Transverse colon (tissue), 4 donors: ENCODE measurements at regions of chr12 and their contacts with region 1.

Region 1: GRCh38 chr12:71627438-71628002 is 36.1 kb downstream of the ZFC3H1 start:
- DNase-seq: no peak
- H3K4me3 ChIP-seq: no peak overlapping the region
- H3K27ac ChIP-seq: no peak overlapping the region
- H3K4me1 ChIP-seq: peaks cover 0 to 7% (median 0%) of the 10 kb centered on the region in 4 donors
- H3K27me3 ChIP-seq: no peaks in the 10 kb centered on the region
- CTCF ChIP-seq: no peak
- EP300 ChIP-seq: no peak
- POLR2A ChIP-seq: no peak

Region 2: GRCh38 chr12:71694099-71694820 is 66.7 kb after region 1 on chr12:
- in situ Hi-C with region 1: no loop called
- intact Hi-C with region 1: loop called (anchors 2 kb)
- DNase-seq: peak; percentile 28
- H3K4me3 ChIP-seq: no peak overlapping the region
- H3K27ac ChIP-seq: peak overlapping the region; percentile 73 to 98 (median 88)
- H3K4me1 ChIP-seq: peaks cover 0 to 60% (median 22%) of the 10 kb centered on the region in 4 donors
- H3K27me3 ChIP-seq: no peaks in the 10 kb centered on the region
- CTCF ChIP-seq: no peak
- EP300 ChIP-seq: no peak
- POLR2A ChIP-seq: no peak

Region 3: GRCh38 chr12:71810905-71811304 is 183.4 kb after region 1 on chr12:
- in situ Hi-C with region 1: no loop called
- intact Hi-C with region 1: no loop called
- DNase-seq: no peak
- H3K4me3 ChIP-seq: no peak overlapping the region
- H3K27ac ChIP-seq: no peak overlapping the region
- H3K4me1 ChIP-seq: no peaks in the 10 kb centered on the region
- H3K27me3 ChIP-seq: peaks cover 10% of the 10 kb centered on the region
- CTCF ChIP-seq: no peak
- EP300 ChIP-seq: no peak
- POLR2A ChIP-seq: no peak

Region 4: DNA sequence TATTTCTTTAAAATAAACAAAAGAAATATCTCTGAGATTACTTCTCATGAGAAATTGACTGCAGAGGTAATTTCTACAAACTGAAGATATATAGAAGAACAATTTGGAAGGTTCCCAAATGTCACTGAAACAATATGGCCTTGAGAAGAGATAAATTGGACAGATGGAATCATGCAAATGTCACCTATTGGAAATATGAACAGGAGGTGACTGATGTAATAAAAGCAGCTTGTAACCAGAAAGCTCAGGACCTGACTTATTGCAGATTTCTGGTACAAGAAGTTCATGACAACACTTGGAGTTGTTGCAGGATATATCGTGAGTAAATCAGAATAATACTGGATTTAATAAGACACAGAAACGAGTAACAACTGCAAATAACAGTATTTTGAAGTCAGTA is 551.4 kb after region 1 on chr12:
- in situ Hi-C with region 1: no loop called
- intact Hi-C with region 1: no loop called
- DNase-seq: no peak
- H3K4me3 ChIP-seq: no peak overlapping the region
- H3K27ac ChIP-seq: no peak overlapping the region
- H3K4me1 ChIP-seq: no peaks in the 10 kb centered on the region
- H3K27me3 ChIP-seq: no peaks in the 10 kb centered on the region
- CTCF ChIP-seq: no peak
- EP300 ChIP-seq: no peak
- POLR2A ChIP-seq: no peak